Dorsolateral prefrontal cortex (tissue), 120 donors: ENCODE measurements at regions of chr1 and their contacts with region 1.

Region 1: GRCh38 chr1:56216218-56216617 is 363.1 kb downstream of the PLPP3 start:
- DNase-seq: peak in 7 of 10 donors; percentile 33 to 70 (median 50)
- H3K4me3 ChIP-seq: no peak overlapping the region
- H3K27ac ChIP-seq: no peak overlapping the region
- H3K27me3 ChIP-seq: peaks cover 0 to 13% (median 0%) of the 10 kb centered on the region in 45 donors
- CTCF ChIP-seq: no peak

Region 2: DNA sequence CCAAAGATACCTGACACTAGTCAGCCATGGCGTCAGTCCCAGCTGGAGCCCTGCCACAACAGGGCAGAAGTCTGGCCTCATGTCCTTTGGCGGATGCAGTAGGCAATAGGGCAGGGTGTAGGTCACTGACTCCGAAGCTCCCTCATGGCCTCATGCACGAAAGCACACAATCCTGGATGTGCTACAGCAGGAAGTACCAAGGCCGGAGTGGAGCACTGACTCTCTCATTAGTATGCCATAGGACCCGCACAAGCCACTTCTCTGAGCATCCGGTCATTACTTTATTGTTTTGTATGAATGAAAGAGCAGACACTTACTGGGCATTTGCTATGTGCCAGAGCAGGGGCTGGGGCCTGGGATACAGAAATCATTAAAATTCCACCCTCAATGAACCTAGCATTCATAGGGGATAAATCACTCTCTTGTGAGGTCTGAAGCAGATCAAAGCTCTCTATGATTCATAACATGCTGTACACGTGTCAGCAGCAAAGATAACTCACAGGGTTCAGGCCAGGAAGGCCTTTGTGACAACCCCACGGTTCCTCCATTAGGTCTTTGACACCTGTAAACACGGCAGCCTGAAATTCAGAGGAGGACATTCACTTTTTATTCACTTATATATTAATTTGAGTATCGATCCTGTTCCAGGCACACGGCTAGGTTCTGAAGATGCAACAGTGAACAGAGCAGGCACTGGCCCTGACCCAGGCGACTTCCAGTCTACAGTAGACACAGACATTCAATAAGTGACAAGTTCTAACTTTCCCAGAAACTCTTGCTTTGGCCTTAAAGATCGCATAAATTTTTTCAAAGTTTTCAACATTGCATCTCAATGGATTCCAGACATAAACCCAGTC is 643.1 kb before region 1 on chr1:
- intact Hi-C with region 1: loop called in 1 of 2 experiments (anchors 10 kb)
- DNase-seq: no peak
- H3K4me3 ChIP-seq: no peak overlapping the region
- H3K27ac ChIP-seq: no peak overlapping the region
- H3K27me3 ChIP-seq: peaks cover 0 to 3% (median 0%) of the 10 kb centered on the region in 45 donors
- CTCF ChIP-seq: no peak